ENCODE measurements at regions of chr12 and their contacts with region 1.

Region 1: GRCh38 chr12:34022079-34022830 is at the start of gene ALG10:
- DNase-seq: peak; percentile 97
- H3K4me3 Mint-ChIP-seq: peak within 1 kb of the TSS; percentile 96
- H3K27ac Mint-ChIP-seq: peak within 1 kb of the TSS; percentile 94
- H3K4me1 Mint-ChIP-seq: peaks cover 15% of the 10 kb centered on the region
- H3K27me3 Mint-ChIP-seq: no peaks in the 10 kb centered on the region
- total RNA-seq, gene ALG10: 19.4 to 20.9 TPM

Region 2: DNA sequence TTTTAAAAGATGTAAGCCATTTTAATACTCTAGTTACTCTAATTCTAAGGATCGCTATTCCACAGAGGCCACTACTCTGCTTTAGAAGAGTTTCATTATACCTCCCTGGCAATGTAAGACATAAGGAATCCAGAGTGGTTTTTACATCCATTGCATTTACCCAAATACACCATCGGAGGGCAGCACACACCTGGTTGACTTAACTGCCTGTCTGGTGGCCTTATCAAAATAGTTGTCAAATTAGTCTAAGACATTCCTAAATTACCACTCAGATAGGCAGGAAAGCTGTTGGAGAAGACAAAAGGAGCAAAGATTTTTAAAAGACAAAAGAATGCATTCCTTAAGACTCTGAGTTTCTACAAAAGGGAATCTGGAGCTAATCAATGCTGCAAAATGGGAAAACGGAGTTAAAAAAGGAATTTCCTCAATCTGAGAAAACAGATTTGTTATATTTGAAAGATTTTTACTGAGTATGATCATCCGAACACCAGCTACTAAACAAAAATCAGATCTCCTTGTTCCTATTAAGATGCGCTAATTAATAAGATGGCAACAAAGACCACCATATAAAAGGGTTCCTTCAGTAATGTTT is 1656.7 kb before region 1 on chr12:
- CTCF ChIA-PET with region 1: no interaction called
- POLR2A ChIA-PET with region 1: no interaction called
- intact Hi-C with region 1: loop called (anchors 10 kb)
- DNase-seq: peak; percentile 53
- H3K4me3 Mint-ChIP-seq: no peak overlapping the region
- H3K27ac Mint-ChIP-seq: no peak overlapping the region
- H3K4me1 Mint-ChIP-seq: no peaks in the 10 kb centered on the region
- H3K27me3 Mint-ChIP-seq: no peaks in the 10 kb centered on the region

Region 3: GRCh38 chr12:32679091-32679919 is 1343.0 kb before region 1 on chr12 and contains the start of gene DNM1L:
- CTCF ChIA-PET with region 1: no interaction called
- POLR2A ChIA-PET with region 1: no interaction called
- intact Hi-C with region 1: loop called (anchors 1 kb)
- DNase-seq: peak; percentile 94
- H3K4me3 Mint-ChIP-seq: peak within 1 kb of the TSS; percentile 87
- H3K27ac Mint-ChIP-seq: peak within 1 kb of the TSS; percentile 85
- H3K4me1 Mint-ChIP-seq: peaks cover 15% of the 10 kb centered on the region
- H3K27me3 Mint-ChIP-seq: no peaks in the 10 kb centered on the region
- total RNA-seq, gene DNM1L: 59.0 to 62.5 TPM

Region 4: DNA sequence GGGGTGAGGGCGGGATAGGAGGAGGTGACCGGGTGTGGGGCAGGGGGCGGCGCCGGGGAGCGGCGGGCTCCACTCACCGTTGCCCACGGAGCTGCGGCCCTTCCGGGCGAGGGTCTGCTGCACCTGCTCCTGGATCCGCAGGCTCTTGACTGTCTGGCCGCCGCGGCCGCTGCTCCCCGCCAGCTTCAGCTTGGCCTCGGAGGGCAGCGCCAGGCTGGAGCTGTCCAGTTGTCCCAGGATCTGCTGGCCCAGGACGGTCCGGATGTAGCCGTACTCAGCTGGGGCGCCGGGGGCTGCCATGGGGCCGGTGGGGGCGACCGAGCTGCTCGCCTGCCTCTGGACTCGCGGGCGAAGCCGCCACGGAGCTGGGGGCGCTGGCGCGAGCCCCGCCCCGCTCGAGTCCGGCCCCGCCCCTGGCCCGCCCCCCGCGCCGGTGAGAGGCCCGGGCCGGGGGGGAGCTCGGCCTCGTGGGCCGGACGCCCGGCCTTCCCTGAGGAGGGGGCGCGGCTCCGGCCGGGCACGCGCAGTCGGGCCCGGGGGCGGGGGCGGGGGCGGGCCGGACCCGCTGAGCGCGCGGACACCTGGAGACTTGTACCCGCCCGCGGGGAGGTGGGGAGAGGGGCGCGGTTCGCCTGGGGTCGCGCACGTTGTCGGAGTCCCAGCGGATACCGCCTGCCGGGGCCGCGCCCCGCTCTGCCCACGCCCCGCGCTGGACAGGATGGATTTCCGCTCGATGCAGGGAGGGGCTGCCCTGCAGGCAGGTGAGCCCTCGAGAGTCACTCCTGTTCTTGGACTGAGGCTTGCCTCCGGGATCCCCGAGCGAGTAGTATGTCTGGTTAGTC is 1125.6 kb before region 1 on chr12 and contains the start of gene PKP2:
- CTCF ChIA-PET with region 1: no interaction called
- POLR2A ChIA-PET with region 1: no interaction called
- intact Hi-C with region 1: loop called (anchors 5 kb)
- DNase-seq: peak; percentile 32
- H3K4me3 Mint-ChIP-seq: peak within 1 kb of the TSS; percentile 60
- H3K27ac Mint-ChIP-seq: no peak within 1 kb of the TSS
- H3K4me1 Mint-ChIP-seq: peaks cover 12% of the 10 kb centered on the region
- H3K27me3 Mint-ChIP-seq: peaks cover 52% of the 10 kb centered on the region
- total RNA-seq, gene PKP2: 0.21 to 0.36 TPM

Measured in activated CD4-positive, alpha-beta memory T cell treated with anti-CD3 and anti-CD28 coated beads for 36 hours (primary cell).